ENCODE measurements at regions of chr12 and their contacts with region 1.

Region 1: GRCh38 chr12:111313833-111314259 is 55.0 kb downstream of the PHETA1 start:
- DNase-seq: peak; percentile 73
- ATAC-seq: peak; percentile 72 to 74

Region 2: GRCh38 chr12:110234755-110235154 is 1079.1 kb before region 1 on chr12:
- intact Hi-C with region 1: no loop called
- DNase-seq: no peak
- ATAC-seq: peak; percentile 41 to 68

Region 3: GRCh38 chr12:110896559-110896958 is 417.3 kb before region 1 on chr12:
- intact Hi-C with region 1: loop called (anchors 5 to 10 kb)
- DNase-seq: no peak
- ATAC-seq: no peak

Region 4: GRCh38 chr12:110937104-110937641 is 376.7 kb before region 1 on chr12:
- intact Hi-C with region 1: loop called (anchors 5 to 10 kb)
- DNase-seq: peak; percentile 40
- ATAC-seq: peak; percentile 59 to 63

Region 5: DNA sequence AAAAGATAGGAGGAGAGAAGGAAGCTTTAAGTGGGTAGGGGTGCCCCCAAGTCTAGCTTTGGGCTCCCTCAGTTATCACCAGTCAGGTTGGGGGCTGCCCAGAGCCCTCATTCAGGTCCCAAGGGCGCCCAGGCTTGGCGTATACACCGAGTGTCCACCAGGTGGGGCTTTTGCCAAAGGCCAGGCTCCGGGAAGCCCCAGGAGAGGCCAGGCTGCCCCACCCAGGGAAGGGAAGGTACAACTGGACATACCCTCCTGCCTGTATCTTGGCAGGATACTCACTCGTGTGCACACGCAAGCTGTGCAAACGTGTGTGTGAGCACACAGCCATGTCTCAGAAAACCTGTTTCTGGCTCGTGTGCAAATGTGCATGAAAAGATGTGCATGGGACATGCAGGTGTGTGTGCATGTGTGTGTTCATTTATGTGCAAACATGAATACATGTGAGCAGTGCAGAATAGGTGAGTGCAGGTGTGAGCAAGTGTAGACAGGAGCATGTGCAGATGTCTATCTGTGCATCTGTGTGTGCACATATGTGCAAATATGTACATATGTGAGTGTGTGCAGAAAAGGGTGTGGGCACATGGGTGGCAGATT is 289.5 kb before region 1 on chr12:
- intact Hi-C with region 1: loop called in 1 of 2 experiments (anchors 5 kb)
- DNase-seq: peak; percentile 37
- ATAC-seq: peak; percentile 53 to 69

Measured in left cardiac atrium (tissue), 4 donors.